Naive thymus-derived CD4-positive, alpha-beta T cell (primary cell): ENCODE measurements at regions of chr20 and their contacts with region 1.

Region 1: DNA sequence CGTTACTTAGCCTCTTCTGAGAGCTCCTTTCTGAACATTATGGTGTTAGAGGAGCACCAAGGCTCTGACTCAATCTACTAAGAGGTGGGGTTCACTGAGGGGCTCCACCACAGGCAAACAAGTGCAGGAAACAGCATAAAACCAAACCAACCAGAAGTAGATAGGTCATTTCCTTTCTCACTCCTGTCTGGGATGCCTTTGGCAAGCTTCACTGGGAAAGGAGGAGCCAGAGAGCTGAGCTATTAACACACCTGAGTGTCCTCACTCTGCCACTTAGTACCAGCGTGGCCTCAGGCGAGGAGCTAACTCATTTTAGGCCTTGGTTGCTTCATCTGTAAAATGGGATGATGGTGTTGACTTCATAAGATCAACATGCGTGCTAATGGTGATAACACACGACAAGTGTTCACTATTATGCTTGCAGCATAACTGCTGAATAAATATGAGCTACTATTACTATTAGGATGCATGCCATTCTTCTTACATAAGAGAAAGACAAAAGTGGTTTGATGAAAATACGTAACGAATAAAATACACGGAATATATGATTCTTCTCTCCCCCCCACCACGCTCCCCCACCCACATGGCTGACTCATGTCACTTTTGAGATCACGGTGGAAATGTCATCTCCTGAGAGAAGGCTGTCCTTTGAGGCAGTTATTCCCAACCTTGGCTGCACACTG is 185.4 kb downstream of the BCAS1 start:
- DNase-seq: peak in 1 of 9 donors; percentile 58
- ATAC-seq: no peak
- H3K4me3 ChIP-seq: no peak overlapping the region
- H3K4me3 Mint-ChIP-seq: peak overlapping the region in 3 of 10 donors; percentile 15 to 27 (median 17)
- H3K27ac ChIP-seq: no peak overlapping the region
- H3K27ac Mint-ChIP-seq: peak overlapping the region in 4 of 9 donors; percentile 12 to 68 (median 42)
- H3K4me1 ChIP-seq: peaks cover 4 to 12% of the 10 kb centered on the region in 2 donors
- H3K4me1 Mint-ChIP-seq: peaks cover 7 to 35% (median 24%) of the 10 kb centered on the region in 7 donors
- H3K27me3 ChIP-seq: no peaks in the 10 kb centered on the region
- H3K27me3 Mint-ChIP-seq: no peaks in the 10 kb centered on the region

Region 2: GRCh38 chr20:53899351-53900167 is 14.6 kb after region 1 on chr20:
- CTCF ChIA-PET with region 1: interaction called, 3 read pairs
- POLR2A ChIA-PET with region 1: interaction called, 5 read pairs
- intact Hi-C with region 1: loop called in 1 of 2 experiments (anchors 2 kb)
- DNase-seq: peak in 8 of 9 donors; percentile 66 to 78 (median 74)
- ATAC-seq: peak; percentile 91
- H3K4me3 ChIP-seq: no peak overlapping the region
- H3K4me3 Mint-ChIP-seq: peak overlapping the region in 7 of 10 donors; percentile 28 to 72 (median 44)
- H3K27ac ChIP-seq: peak overlapping the region; percentile 2
- H3K27ac Mint-ChIP-seq: peak overlapping the region; percentile 61 to 92 (median 81)
- H3K4me1 ChIP-seq: peaks cover 13 to 18% of the 10 kb centered on the region in 2 donors
- H3K4me1 Mint-ChIP-seq: peaks cover 0 to 51% (median 40%) of the 10 kb centered on the region in 7 donors
- H3K27me3 ChIP-seq: no peaks in the 10 kb centered on the region
- H3K27me3 Mint-ChIP-seq: no peaks in the 10 kb centered on the region

Region 3: GRCh38 chr20:54456971-54457370 is 572.0 kb after region 1 on chr20:
- CTCF ChIA-PET with region 1: no interaction called
- POLR2A ChIA-PET with region 1: no interaction called
- intact Hi-C with region 1: no loop called
- DNase-seq: no peak
- ATAC-seq: no peak
- H3K4me3 ChIP-seq: no peak overlapping the region
- H3K4me3 Mint-ChIP-seq: no peak overlapping the region
- H3K27ac ChIP-seq: no peak overlapping the region
- H3K27ac Mint-ChIP-seq: no peak overlapping the region
- H3K4me1 ChIP-seq: no peaks in the 10 kb centered on the region
- H3K4me1 Mint-ChIP-seq: no peaks in the 10 kb centered on the region
- H3K27me3 ChIP-seq: no peaks in the 10 kb centered on the region
- H3K27me3 Mint-ChIP-seq: peaks cover 0 to 30% (median 12%) of the 10 kb centered on the region in 5 donors

Region 4: DNA sequence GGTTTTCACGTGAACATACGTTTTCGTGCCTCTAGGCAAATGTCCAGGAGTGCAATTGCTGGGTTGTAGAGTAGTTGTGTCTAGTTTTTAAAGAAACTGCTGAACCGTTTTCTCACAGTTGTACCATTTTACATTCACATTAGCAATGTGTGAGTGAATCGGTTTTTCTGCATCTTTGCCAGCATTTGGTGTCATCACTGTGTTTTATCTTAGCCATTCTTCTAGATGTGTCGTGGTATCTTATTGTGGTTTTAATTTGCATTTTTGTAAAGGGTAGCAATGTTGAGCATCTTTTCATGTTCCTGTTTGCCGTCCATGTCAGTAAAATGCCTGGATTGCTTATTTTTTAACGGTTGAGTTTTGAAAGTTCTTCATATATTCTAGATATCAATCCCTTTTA is 600.6 kb after region 1 on chr20:
- CTCF ChIA-PET with region 1: no interaction called
- POLR2A ChIA-PET with region 1: no interaction called
- intact Hi-C with region 1: no loop called
- DNase-seq: no peak
- ATAC-seq: no peak
- H3K4me3 ChIP-seq: no peak overlapping the region
- H3K4me3 Mint-ChIP-seq: no peak overlapping the region
- H3K27ac ChIP-seq: no peak overlapping the region
- H3K27ac Mint-ChIP-seq: no peak overlapping the region
- H3K4me1 ChIP-seq: no peaks in the 10 kb centered on the region
- H3K4me1 Mint-ChIP-seq: no peaks in the 10 kb centered on the region
- H3K27me3 ChIP-seq: no peaks in the 10 kb centered on the region
- H3K27me3 Mint-ChIP-seq: peaks cover 0 to 39% (median 14%) of the 10 kb centered on the region in 5 donors